Activated CD4-positive, alpha-beta memory T cell treated with anti-CD3 and anti-CD28 coated beads for 36 hours (primary cell): ENCODE measurements at regions of chr1 and their contacts with region 1.

Region 1: DNA sequence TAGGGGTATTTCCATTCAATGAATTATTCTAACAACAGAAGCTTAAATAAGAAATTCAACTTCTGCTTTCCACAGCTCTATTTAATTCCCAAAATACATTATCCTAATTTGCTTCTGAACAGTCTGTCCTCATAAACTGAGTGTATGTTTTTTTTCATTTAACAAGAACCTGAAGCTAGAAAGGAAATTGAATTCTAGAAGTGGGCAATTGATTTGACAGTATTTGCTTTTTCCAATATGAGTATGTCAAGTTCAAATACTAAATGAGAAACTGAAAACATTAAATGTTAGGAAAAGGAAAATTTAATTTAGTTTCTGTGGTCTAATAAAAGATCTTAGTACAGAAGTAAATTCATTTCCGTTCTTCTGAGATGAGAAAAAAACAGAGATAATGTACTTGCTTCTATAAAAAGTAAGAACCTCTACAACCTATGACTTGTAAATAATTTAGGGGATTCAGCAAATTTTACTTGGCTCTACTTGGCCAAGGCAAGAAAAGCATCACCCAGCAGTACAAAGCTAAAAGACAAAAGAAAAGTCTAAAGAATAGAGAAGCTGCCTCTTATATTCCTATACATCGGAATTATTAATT is 31.1 kb downstream of the RAB3GAP2 start:
- DNase-seq: no peak
- H3K4me3 Mint-ChIP-seq: no peak overlapping the region
- H3K27ac Mint-ChIP-seq: no peak overlapping the region
- H3K4me1 Mint-ChIP-seq: peaks cover 40% of the 10 kb centered on the region
- H3K27me3 Mint-ChIP-seq: no peaks in the 10 kb centered on the region

Region 2: GRCh38 chr1:220224033-220224432 is 17.1 kb before region 1 on chr1:
- CTCF ChIA-PET with region 1: interaction called, 5 read pairs
- POLR2A ChIA-PET with region 1: no interaction called
- intact Hi-C with region 1: loop called (anchors 1 kb)
- DNase-seq: no peak
- H3K4me3 Mint-ChIP-seq: no peak overlapping the region
- H3K27ac Mint-ChIP-seq: no peak overlapping the region
- H3K4me1 Mint-ChIP-seq: peaks cover 69% of the 10 kb centered on the region
- H3K27me3 Mint-ChIP-seq: no peaks in the 10 kb centered on the region

Region 3: GRCh38 chr1:220255204-220255603 is 14.0 kb after region 1 on chr1:
- CTCF ChIA-PET with region 1: no interaction called
- POLR2A ChIA-PET with region 1: no interaction called
- intact Hi-C with region 1: loop called (anchors 2 kb)
- DNase-seq: no peak
- H3K4me3 Mint-ChIP-seq: no peak overlapping the region
- H3K27ac Mint-ChIP-seq: no peak overlapping the region
- H3K4me1 Mint-ChIP-seq: peaks cover 41% of the 10 kb centered on the region
- H3K27me3 Mint-ChIP-seq: no peaks in the 10 kb centered on the region